ENCODE measurements at regions of chr5 and their contacts with region 1.

Region 1: GRCh38 chr5:131589510-131590348 is 45.3 kb downstream of the RAPGEF6 start:
- DNase-seq: no peak
- H3K4me3 ChIP-seq: no peak overlapping the region
- H3K27ac ChIP-seq: no peak overlapping the region
- H3K4me1 ChIP-seq: peaks cover 0 to 7% (median 0%) of the 10 kb centered on the region in 4 donors
- H3K27me3 ChIP-seq: no peaks in the 10 kb centered on the region
- CTCF ChIP-seq: peak; percentile 77 to 84

Region 2: DNA sequence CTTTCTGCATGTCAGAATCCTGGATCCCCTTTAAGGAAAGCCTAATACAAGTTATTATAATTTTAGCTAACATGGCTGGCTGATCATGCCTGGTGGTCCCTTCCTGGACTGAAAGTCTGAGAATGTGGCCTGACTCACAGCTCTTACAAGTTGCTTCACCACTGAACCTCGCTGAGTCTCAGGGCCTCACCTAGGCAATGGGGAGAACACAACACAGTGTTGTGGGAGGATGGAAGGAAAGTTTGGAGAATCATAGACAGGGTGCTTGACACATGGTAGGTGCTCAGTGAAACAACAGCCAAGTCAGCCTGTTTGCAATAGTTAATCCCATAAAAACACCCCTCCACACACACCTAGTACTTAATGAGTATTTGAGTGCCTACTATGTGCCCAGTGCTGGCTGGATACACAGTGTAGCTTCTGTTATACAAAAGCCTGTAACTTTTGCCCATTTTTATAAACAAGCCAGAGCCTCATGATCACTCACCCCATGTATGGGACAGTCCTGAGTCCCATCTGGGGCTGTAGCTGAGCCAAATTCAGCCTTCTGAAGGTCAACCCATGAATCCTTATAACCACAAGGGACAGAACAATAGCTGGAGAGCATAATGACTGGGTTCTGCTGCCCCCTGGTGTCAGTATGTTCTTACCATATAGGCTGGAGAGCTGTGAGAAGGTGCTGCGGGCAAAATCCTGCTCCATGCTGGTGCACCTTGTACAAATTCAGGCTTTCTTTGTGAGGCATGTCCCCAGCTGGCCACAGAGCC is 417.9 kb after region 1 on chr5:
- intact Hi-C with region 1: loop called (anchors 5 kb)
- DNase-seq: peak in 1 of 2 donors; percentile 77
- H3K4me3 ChIP-seq: no peak overlapping the region
- H3K27ac ChIP-seq: no peak overlapping the region
- H3K4me1 ChIP-seq: peaks cover 0 to 20% (median 16%) of the 10 kb centered on the region in 4 donors
- H3K27me3 ChIP-seq: peaks cover 0 to 40% of the 10 kb centered on the region in 2 donors
- CTCF ChIP-seq: peak; percentile 62 to 78

Region 3: DNA sequence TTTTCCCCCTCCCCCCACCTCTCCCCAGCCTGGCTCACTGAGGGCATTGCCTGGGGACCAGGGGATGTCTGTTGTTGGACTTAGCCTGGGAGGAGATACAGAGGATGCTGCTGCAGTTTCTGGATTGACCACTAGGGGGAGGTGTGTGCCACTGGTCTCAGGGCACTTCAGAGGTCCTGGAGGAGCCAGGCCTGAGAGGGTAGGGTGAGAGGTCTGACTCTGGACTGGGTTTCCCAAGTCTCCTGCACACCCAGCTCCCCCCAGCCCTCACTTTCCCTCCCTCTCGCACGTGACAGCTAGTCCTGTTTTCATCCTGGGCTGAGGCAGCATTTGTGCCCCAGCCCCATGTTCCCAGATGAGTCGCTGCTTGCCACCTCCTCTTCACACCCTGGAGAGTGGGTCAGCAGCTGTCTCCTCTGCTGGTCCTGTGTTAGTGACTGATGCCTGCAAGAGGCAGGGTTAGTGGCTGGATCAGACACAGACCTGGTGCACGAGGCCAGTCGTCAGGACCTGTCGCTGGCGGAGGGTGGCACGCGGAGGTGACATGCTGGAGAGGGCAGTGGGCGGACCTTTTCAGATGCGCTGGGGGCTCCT is 475.1 kb after region 1 on chr5:
- intact Hi-C with region 1: loop called (anchors 5 kb)
- DNase-seq: peak; percentile 67 to 78
- H3K4me3 ChIP-seq: no peak overlapping the region
- H3K27ac ChIP-seq: no peak overlapping the region
- H3K4me1 ChIP-seq: no peaks in the 10 kb centered on the region
- H3K27me3 ChIP-seq: no peaks in the 10 kb centered on the region
- CTCF ChIP-seq: peak; percentile 73 to 91